Gastrocnemius medialis (tissue), 4 donors: ENCODE measurements at regions of chr10 and their contacts with region 1.

Region 1: DNA sequence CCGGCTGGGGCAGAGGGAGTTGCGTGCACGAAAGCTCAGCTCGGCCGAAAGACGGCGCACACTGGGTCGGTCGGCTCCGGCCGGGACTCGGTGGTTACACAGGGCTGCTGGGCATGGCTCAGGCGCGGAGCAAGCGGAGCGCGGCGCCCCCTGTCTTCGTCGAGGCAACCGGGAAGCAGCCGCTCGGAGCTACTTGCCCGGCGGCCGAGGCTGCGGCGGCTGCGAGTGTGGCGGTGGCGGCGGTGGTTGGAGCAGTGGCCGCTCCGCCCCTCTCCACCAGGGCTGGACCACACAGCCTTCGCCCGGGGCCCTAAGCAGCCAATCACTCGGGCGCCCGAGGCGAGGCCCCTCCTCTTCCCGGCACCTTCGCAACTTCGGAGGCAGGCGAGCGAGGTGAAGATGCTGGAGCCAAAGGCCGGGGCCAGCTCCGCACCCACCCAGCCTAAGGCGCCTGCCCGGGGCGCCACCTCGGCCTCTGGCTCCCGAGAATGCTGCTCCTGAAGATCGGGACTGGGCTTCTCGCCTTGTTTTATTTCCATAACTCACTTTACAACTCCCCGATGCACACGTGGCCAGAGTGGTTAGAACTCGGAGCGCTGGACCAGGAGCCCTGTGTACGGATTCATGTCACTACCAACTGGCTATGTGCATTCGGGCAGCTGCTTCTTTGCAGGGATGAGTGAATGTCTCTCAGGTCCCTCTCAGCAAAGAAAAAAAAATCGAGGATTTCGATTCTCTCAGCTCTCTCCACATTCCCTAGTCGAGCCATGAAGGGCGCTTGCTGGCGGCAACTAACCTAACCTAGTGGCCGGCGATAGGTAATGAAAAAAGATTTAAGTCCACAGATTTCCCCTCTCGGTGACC is at the start of gene TLL2:
- DNase-seq: peak; percentile 76 to 81
- ATAC-seq: peak; percentile 84 to 88
- H3K4me3 ChIP-seq: peak within 1 kb of the TSS; percentile 61 to 73 (median 66)
- H3K27ac ChIP-seq: peak within 1 kb of the TSS; percentile 39 to 61 (median 58)
- H3K4me1 ChIP-seq: peaks cover 13 to 26% of the 10 kb centered on the region in 2 donors
- H3K27me3 ChIP-seq: no peaks in the 10 kb centered on the region
- CTCF ChIP-seq: peak; percentile 59 to 87 (median 85)
- POLR2A ChIP-seq: peak in 1 of 2 donors; percentile 56
- total RNA-seq, gene TLL2: 0.10 to 1.0 (median 0.44) TPM in 3 of 4 donors, not detected in the other

Region 2: GRCh38 chr10:96285331-96285752 is 228.6 kb before region 1 on chr10:
- in situ Hi-C with region 1: no loop called
- intact Hi-C with region 1: no loop called
- DNase-seq: no peak
- ATAC-seq: no peak
- H3K4me3 ChIP-seq: no peak overlapping the region
- H3K27ac ChIP-seq: no peak overlapping the region
- H3K4me1 ChIP-seq: peaks cover 14% of the 10 kb centered on the region in 2 donors
- H3K27me3 ChIP-seq: no peaks in the 10 kb centered on the region
- CTCF ChIP-seq: no peak
- POLR2A ChIP-seq: no peak

Region 3: DNA sequence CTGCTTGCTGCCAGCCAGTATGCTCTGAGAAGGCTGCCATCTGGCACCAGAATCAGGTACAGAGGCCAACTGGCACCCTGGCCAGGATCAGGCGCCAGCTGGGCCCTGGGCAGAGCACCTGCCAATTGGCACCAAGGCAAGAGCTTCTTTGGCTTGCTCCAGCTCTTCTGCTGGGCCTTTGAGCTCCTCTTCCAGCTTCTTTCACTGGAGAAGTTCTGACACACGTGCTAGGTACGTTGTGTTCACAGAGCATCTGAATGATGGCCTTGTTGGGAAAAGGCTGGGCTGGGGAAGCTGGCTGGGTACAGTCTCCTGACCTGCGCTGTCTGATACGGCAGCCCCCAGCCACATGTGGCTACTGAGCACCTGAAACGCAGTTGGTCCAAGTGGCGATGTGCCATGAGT is 123.5 kb before region 1 on chr10:
- in situ Hi-C with region 1: loop called in 2 of 4 experiments (anchors 5 to 25 kb)
- intact Hi-C with region 1: no loop called
- DNase-seq: peak; percentile 77 to 92
- ATAC-seq: peak; percentile 98 to 100
- H3K4me3 ChIP-seq: no peak overlapping the region
- H3K27ac ChIP-seq: peak overlapping the region in 3 of 4 donors; percentile 42 to 64 (median 53)
- H3K4me1 ChIP-seq: peaks cover 8 to 16% of the 10 kb centered on the region in 2 donors
- H3K27me3 ChIP-seq: no peaks in the 10 kb centered on the region
- CTCF ChIP-seq: no peak
- POLR2A ChIP-seq: no peak

Region 4: GRCh38 chr10:96395931-96396877 is 117.7 kb before region 1 on chr10:
- in situ Hi-C with region 1: loop called in 2 of 4 experiments (anchors 5 to 25 kb)
- intact Hi-C with region 1: loop called (anchors 2 kb)
- DNase-seq: peak; percentile 45 to 49
- ATAC-seq: peak; percentile 60 to 77
- H3K4me3 ChIP-seq: no peak overlapping the region
- H3K27ac ChIP-seq: no peak overlapping the region
- H3K4me1 ChIP-seq: peaks cover 0 to under 1% of the 10 kb centered on the region in 2 donors
- H3K27me3 ChIP-seq: peaks cover 0 to 15% (median 0%) of the 10 kb centered on the region in 3 donors
- CTCF ChIP-seq: peak; percentile 69 to 85 (median 78)
- POLR2A ChIP-seq: no peak

Region 5: GRCh38 chr10:96586419-96587263 is 72.7 kb after region 1 on chr10 and contains the start of gene TM9SF3:
- in situ Hi-C with region 1: no loop called
- intact Hi-C with region 1: loop called (anchors 1 kb)
- DNase-seq: peak; percentile 90
- ATAC-seq: peak; percentile 89 to 92
- H3K4me3 ChIP-seq: peak within 1 kb of the TSS; percentile 78 to 95 (median 84)
- H3K27ac ChIP-seq: peak within 1 kb of the TSS; percentile 91 to 97 (median 95)
- H3K4me1 ChIP-seq: peaks cover 34 to 47% of the 10 kb centered on the region in 2 donors
- H3K27me3 ChIP-seq: no peaks in the 10 kb centered on the region
- CTCF ChIP-seq: peak in 2 of 5 experiments; percentile 19 to 25
- POLR2A ChIP-seq: peak; percentile 96 to 98
- total RNA-seq, gene TM9SF3: 27.5 to 32.4 (median 31.0) TPM